ENCODE measurements at regions of chr1 and their contacts with region 1.

Region 1: DNA sequence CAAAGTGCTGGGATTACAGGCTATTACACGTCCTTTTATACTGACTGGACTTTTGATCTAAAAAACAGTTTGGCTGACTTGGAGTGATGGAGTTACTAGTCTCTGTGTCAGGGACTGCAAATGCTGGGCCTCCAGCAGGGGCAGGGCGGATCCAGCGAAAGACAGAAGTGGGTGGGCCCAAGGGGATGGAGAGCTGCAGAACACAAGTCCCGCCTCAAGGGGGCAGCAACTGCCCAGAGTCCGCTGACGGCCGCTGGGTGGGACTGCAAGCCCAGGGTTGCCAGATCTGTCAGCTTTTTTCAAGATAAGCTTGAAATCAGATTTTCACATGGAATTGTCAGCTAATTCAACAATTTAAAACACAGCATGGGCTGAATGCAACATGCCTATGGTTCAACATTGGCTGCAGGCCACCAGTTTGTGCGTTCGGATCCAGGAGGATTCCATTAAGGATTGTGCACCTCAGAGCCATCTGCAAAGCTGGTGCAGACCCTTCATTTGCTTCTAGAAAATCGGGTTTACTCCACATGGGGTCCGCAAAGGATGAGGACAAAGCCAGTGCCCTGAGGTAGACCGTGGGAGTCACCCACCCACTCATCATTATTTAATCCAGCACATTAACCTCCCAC is 10.7 kb downstream of the STMN1 start:
- DNase-seq: peak; percentile 86 to 93
- ATAC-seq: peak; percentile 84 to 86
- H3K4me3 ChIP-seq: no peak overlapping the region
- H3K27ac ChIP-seq: peak overlapping the region; percentile 94 to 98
- H3K4me1 ChIP-seq: peaks cover 40% of the 10 kb centered on the region
- CTCF ChIP-seq: peak; percentile 86
- EP300 ChIP-seq: no peak
- POLR2A ChIP-seq: no peak
- RAD21 ChIP-seq: peak; percentile 83 to 84

Region 2: GRCh38 chr1:25743826-25744581 is 151.5 kb before region 1 on chr1:
- CTCF ChIA-PET with region 1: no interaction called
- POLR2A ChIA-PET with region 1: no interaction called
- DNase-seq: peak; percentile 27 to 39
- ATAC-seq: peak; percentile 92 to 94
- H3K4me3 ChIP-seq: no peak overlapping the region
- H3K27ac ChIP-seq: 0 out of 6 replicates have a peak overlapping the region, but pooled peaks of 1 of the 2 experiments have one; percentile 28
- H3K4me1 ChIP-seq: no peaks in the 10 kb centered on the region
- CTCF ChIP-seq: peak; percentile 19; the same call in 2 of the 3 replicates
- EP300 ChIP-seq: no peak
- POLR2A ChIP-seq: no peak
- RAD21 ChIP-seq: peak; percentile 49; a peak in 4 of 5 replicates

Region 3: GRCh38 chr1:25766721-25767436 is 128.6 kb before region 1 on chr1:
- CTCF ChIA-PET with region 1: no interaction called
- POLR2A ChIA-PET with region 1: no interaction called
- DNase-seq: no peak
- ATAC-seq: no peak; a peak in 1 of 6 replicates
- H3K4me3 ChIP-seq: no peak overlapping the region
- H3K27ac ChIP-seq: no peak overlapping the region
- H3K4me1 ChIP-seq: peaks cover under 1% of the 10 kb centered on the region; the same call in 1 of the 3 replicates
- CTCF ChIP-seq: no peak
- EP300 ChIP-seq: no peak
- POLR2A ChIP-seq: no peak
- RAD21 ChIP-seq: no peak

Region 4: DNA sequence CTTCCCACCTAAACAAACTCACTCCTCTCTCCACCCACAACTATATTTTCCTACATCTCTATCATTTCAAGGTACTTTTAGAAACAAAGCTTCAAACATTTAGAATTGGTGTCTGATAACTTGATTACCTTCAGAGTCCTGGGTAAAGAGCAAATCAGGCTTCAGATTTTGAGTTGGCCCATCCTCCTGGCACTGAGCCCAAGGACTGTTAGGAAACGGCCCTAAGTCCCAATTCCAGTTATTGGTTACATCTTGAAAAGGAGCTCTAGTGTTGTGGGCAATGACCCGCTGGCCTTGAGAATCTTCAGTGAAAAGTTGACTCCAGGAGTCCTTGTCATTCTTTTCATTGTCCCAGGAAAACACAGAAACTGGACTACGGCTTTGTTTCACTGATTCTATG is 60.6 kb before region 1 on chr1:
- CTCF ChIA-PET with region 1: interaction called, 11 read pairs
- POLR2A ChIA-PET with region 1: no interaction called
- DNase-seq: no peak
- ATAC-seq: no peak
- H3K4me3 ChIP-seq: no peak overlapping the region
- H3K27ac ChIP-seq: no peak overlapping the region
- H3K4me1 ChIP-seq: no peaks in the 10 kb centered on the region
- CTCF ChIP-seq: no peak
- EP300 ChIP-seq: no peak
- POLR2A ChIP-seq: no peak
- RAD21 ChIP-seq: no peak

Region 5: DNA sequence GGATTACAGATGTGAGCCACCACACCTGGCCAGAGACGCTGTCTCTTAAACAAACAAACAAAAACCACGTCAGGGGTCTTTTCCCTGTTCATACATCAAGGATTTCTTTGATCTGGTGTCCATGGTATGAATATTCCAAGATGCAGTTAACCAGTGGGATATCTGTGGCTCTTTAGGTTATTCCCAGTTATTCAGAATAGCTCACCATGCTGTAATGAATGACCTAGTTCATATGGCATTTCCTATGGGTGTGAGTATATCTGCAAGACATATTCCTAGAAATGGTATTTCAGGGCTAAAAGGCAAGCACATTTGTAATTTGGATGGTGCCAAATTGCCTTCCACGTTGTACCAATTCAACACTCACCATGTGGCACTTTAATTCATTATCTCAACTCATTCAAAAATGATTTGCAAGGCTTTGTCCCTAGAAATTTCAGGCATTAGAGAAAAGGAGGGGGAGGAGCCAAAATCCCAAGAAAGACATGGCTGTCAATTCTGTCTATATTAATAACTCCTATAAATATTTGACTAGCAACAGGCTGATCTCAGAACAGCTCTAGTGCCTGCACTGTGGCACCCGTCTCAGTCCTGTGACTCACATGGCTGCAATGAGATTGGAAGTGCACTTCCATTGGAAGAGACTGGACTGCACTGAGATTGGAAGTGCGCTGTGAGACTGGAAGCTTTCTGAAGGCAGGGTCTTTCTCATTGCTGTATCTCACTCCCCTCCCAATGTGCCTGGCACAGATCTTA is 16.8 kb after region 1 on chr1:
- CTCF ChIA-PET with region 1: interaction called, 35 read pairs
- POLR2A ChIA-PET with region 1: no interaction called
- DNase-seq: peak in 1 of 2 experiments; percentile 32
- ATAC-seq: peak; percentile 71 to 73
- H3K4me3 ChIP-seq: no peak overlapping the region
- H3K27ac ChIP-seq: no peak overlapping the region
- H3K4me1 ChIP-seq: peaks cover 4% of the 10 kb centered on the region; the same call in 1 of the 3 replicates
- CTCF ChIP-seq: no peak
- EP300 ChIP-seq: no peak
- POLR2A ChIP-seq: no peak
- RAD21 ChIP-seq: no peak

Region 6: GRCh38 chr1:25997828-25998761 is 102.6 kb after region 1 on chr1 and contains the start of gene PAFAH2:
- CTCF ChIA-PET with region 1: interaction called, 84 read pairs
- POLR2A ChIA-PET with region 1: interaction called, 11 read pairs
- DNase-seq: peak; percentile 84 to 99
- ATAC-seq: peak; percentile 98 to 99
- H3K4me3 ChIP-seq: peak within 1 kb of the TSS; percentile 74
- H3K27ac ChIP-seq: peak within 1 kb of the TSS; percentile 88 to 94
- H3K4me1 ChIP-seq: peaks cover 11% of the 10 kb centered on the region
- CTCF ChIP-seq: peak; percentile 89
- EP300 ChIP-seq: no peak
- POLR2A ChIP-seq: peak; percentile 11; the same call in 1 of the 2 replicates
- RAD21 ChIP-seq: peak; percentile 92 to 94
- polyA plus RNA-seq, gene PAFAH2: 13.7 and 13.8 TPM in 2 replicates

Region 7: DNA sequence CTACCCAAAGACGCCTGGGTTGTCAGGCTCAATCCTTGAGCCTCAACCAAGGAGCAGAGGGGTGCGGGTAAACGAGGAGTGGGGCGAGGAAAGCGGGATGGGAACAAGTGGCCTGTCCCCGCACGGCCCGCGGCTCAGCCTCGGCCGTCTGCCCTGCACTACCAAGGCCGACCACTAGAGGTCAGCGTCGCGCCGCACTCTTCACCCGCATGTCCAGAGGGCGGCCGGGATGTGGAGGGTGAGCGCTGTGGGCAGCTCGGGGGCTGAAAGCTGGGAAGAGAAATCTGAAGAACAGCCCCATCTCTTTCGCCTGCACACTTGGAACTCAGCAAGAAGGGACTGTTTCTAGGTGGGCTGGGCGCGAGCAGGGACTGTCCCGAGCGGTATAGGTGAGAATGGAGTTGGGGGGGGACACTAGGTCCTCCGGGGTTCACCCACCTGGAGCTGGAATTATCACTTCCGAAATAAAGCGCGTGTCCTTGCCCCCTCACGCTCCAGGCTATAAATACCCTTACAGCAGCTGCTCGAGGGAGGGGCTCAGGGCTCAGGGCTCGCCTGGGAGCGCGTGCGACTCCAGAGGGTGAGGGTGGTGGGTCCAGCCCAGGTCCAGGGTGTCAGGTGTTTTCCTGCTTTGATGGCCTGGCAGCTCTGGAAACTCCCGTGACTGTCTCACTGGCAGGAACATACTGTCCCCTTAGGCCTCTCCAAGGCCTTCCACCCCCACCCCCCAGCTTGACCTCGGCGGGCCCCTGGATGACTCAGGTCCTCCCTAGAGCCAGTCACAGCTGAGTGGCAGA is 140.7 kb after region 1 on chr1:
- CTCF ChIA-PET with region 1: interaction called, 12 read pairs
- POLR2A ChIA-PET with region 1: no interaction called
- DNase-seq: peak; percentile 55 to 78
- ATAC-seq: peak; percentile 75 to 93
- H3K4me3 ChIP-seq: peak overlapping the region; percentile 70
- H3K27ac ChIP-seq: peak overlapping the region; percentile 72 to 87
- H3K4me1 ChIP-seq: peaks cover 11% of the 10 kb centered on the region
- CTCF ChIP-seq: peak; percentile 81
- EP300 ChIP-seq: no peak
- POLR2A ChIP-seq: no peak
- RAD21 ChIP-seq: peak; percentile 79 to 85